ENCODE measurements at regions of chr10 and their contacts with region 1.

Region 1: DNA sequence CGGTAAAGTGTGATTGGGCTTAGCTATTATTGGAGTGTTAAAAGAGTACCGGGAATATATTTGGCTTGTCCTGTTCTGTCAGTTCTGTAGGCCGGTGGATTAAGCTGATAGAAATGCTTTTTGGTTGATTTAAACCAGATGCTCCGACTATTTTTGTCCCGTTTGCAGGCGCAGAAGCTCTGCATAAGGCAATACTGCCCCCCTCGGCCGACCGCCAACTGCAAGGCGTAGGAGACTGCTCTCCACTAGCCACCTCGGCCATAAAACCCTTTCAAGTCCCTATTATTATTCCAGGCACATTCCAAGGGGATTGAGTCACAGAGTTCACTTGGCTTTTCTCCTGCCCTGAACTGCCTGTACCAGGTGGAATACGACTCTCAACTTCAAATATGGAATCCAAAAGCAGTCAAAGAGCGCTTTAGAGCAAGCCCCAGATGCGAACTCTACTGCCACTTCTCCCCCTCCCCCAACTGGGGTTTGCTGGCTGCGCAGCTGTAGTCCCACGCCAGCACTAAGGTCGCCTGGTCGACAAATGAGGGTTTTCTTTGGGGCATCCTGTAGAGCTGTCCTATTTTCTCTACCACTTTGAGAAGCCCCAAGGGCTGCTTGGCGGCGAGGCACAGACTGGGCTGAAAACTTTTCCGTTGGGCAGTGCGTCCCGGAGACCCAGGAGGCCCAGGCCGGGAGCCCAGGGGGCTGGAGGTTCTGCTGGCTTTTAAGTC is 108.3 kb downstream of the REEP3 start:
- DNase-seq: peak; percentile 95 to 98
- ATAC-seq: peak; percentile 72 to 91 (median 84)
- H3K4me3 ChIP-seq: peak overlapping the region; percentile 30 to 74 (median 62)
- H3K27ac ChIP-seq: peak overlapping the region; percentile 78 to 100 (median 98)
- H3K4me1 ChIP-seq: peaks cover 0 to 43% (median 35%) of the 10 kb centered on the region in 9 donors
- H3K27me3 ChIP-seq: no peaks in the 10 kb centered on the region
- CTCF ChIP-seq: peak; percentile 59 to 91 (median 79)

Region 2: DNA sequence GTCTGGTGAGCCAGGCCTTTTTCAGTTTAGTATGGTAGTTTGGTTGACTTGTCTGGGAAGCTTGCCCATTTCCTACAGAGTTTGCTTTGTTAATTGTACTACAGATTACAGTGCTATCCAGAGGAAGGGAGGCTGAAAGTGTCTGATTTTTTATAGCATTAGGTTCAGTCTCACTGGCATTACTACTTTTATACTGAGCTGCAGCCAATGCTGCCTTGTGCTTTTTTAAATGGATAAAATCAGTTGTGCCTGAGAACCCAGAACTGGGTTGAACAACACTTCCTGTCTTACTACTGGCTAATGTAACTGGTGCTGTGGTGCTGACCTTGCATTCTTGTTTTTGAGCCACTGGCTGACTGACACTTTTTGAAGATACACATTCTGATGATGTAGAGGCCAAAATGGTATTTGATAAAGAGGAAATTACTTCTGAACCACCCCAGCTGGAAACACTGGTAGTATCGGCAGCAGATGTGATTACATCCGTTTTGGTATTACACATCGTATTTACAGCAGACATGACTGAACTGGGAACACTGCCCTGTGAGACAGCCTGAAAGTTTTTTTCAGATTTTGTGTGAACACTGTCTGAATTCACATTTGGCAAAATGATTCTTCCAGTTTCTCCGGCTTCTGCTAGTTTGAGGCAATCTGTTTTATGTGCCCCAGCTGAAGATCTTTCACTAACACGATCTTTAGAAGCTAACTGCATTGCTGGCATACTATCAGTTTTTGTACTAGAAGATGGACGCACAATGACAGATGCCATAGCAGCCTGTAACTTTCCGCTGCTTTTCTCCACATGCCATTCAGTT is 422.3 kb before region 1 on chr10:
- intact Hi-C with region 1: loop called in 3 of 10 experiments (anchors 5 to 10 kb)
- DNase-seq: peak in 1 of 2 donors; percentile 51
- ATAC-seq: peak; percentile 66 to 83 (median 80)
- H3K4me3 ChIP-seq: peak overlapping the region in 4 of 10 donors; percentile 9 to 26 (median 18)
- H3K27ac ChIP-seq: peak overlapping the region; percentile 7 to 80 (median 74)
- H3K4me1 ChIP-seq: peaks cover 0 to 78% (median 72%) of the 10 kb centered on the region in 9 donors
- H3K27me3 ChIP-seq: no peaks in the 10 kb centered on the region
- CTCF ChIP-seq: no peak

Region 3: GRCh38 chr10:63268798-63269503 is 360.6 kb before region 1 on chr10:
- intact Hi-C with region 1: loop called in 6 of 10 experiments (anchors 1 to 5 kb)
- DNase-seq: peak; percentile 21 to 93
- ATAC-seq: peak; percentile 94 to 99 (median 96)
- H3K4me3 ChIP-seq: peak overlapping the region; percentile 41 to 66 (median 59)
- H3K27ac ChIP-seq: peak overlapping the region; percentile 83 to 95 (median 89)
- H3K4me1 ChIP-seq: peaks cover 0 to 40% (median 23%) of the 10 kb centered on the region in 9 donors
- H3K27me3 ChIP-seq: no peaks in the 10 kb centered on the region
- CTCF ChIP-seq: peak in 6 of 9 donors; percentile 24 to 55 (median 46)

Region 4: DNA sequence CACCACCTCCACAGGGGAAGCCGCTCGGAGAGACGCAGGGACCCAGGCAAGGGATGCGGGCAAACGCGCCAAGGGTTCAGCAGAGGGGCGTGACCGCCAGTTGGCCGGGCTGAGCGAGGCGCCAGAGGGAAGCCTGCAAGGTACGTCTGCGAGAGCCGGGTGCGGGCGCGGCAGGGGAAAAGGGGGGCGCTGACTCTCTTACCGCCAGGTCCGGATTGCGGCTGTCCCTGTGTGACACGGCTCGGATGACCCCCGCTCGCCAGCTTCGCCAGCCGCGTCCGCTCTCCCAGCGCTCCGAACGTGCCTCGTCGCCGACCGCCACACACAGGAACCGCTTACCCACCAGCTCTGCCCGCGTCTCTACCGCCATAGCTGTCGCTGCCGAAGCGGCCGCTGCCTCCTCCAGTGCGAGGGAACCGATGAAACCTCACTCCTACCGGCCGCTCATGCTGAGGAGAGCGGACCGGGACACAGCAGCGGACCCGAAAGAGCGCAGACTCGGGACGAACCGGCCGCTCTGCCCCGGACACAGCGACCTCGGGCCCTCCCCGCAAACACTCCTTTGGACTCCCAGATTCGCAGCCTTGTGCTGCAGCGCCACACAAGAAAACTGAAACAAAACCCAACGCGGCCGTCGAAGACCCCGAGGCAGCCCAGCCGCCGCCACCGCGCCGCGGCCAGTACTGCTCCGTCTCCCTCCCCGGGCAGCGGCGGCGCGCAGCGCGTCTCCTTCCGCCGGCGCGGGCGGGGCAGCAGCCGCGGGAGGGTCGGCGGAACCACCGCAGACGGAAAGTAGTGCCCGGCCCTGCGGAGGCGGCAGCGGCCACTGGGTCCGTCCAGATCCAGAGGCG is 164.0 kb before region 1 on chr10 and contains the start of gene JMJD1C:
- intact Hi-C with region 1: loop called in 6 of 10 experiments (anchors 1 to 10 kb)
- DNase-seq: peak; percentile 76 to 84
- ATAC-seq: peak; percentile 91 to 97 (median 94)
- H3K4me3 ChIP-seq: peak within 1 kb of the TSS; percentile 77 to 86 (median 84)
- H3K27ac ChIP-seq: peak within 1 kb of the TSS; percentile 73 to 97 (median 93)
- H3K4me1 ChIP-seq: peaks cover 0 to 40% (median 28%) of the 10 kb centered on the region in 9 donors
- H3K27me3 ChIP-seq: no peaks in the 10 kb centered on the region
- CTCF ChIP-seq: peak in 1 of 9 donors; percentile 9
- total RNA-seq, gene JMJD1C: 30.9 to 51.9 (median 39.2) TPM

Region 5: GRCh38 chr10:63670291-63670898 is 40.9 kb after region 1 on chr10:
- intact Hi-C with region 1: loop called in 5 of 10 experiments (anchors 1 to 5 kb)
- DNase-seq: peak in 1 of 2 donors; percentile 80
- ATAC-seq: peak; percentile 74 to 92 (median 88)
- H3K4me3 ChIP-seq: peak overlapping the region in 2 of 10 donors; percentile 3 to 18
- H3K27ac ChIP-seq: peak overlapping the region; percentile 69 to 89 (median 77)
- H3K4me1 ChIP-seq: peaks cover 3 to 62% (median 53%) of the 10 kb centered on the region in 9 donors
- H3K27me3 ChIP-seq: no peaks in the 10 kb centered on the region
- CTCF ChIP-seq: no peak

Region 6: GRCh38 chr10:63711867-63712716 is 82.6 kb after region 1 on chr10:
- intact Hi-C with region 1: loop called in 9 of 10 experiments (anchors 1 to 5 kb)
- DNase-seq: peak; percentile 90 to 94
- ATAC-seq: peak; percentile 90 to 97 (median 93)
- H3K4me3 ChIP-seq: no peak overlapping the region
- H3K27ac ChIP-seq: peak overlapping the region; percentile 76 to 93 (median 82)
- H3K4me1 ChIP-seq: peaks cover 15 to 78% (median 55%) of the 10 kb centered on the region in 9 donors
- H3K27me3 ChIP-seq: no peaks in the 10 kb centered on the region
- CTCF ChIP-seq: no peak

Region 7: DNA sequence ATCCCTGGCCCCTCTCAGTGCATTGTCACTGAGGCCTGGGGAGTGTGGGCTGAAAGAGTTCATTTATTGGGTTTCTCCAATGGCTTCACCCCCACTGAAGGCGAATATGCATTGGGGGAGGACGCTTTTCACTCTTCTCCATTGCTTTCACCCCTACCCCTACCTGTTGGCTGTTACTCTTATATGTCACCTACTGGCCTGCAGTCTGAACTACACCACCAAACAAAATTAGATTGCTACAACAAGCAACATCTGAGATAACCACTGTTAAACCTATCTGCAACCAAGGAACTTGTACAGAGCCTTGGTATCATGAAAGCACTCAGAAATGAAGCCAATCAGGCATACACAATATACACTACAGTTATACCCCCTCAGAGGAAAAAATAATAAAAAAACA is 95.4 kb after region 1 on chr10:
- intact Hi-C with region 1: no loop called
- DNase-seq: no peak
- ATAC-seq: no peak
- H3K4me3 ChIP-seq: no peak overlapping the region
- H3K27ac ChIP-seq: no peak overlapping the region
- H3K4me1 ChIP-seq: peaks cover 0 to 33% (median 11%) of the 10 kb centered on the region in 9 donors
- H3K27me3 ChIP-seq: peaks cover 0 to 15% (median 0%) of the 10 kb centered on the region in 7 donors
- CTCF ChIP-seq: no peak

Region 8: DNA sequence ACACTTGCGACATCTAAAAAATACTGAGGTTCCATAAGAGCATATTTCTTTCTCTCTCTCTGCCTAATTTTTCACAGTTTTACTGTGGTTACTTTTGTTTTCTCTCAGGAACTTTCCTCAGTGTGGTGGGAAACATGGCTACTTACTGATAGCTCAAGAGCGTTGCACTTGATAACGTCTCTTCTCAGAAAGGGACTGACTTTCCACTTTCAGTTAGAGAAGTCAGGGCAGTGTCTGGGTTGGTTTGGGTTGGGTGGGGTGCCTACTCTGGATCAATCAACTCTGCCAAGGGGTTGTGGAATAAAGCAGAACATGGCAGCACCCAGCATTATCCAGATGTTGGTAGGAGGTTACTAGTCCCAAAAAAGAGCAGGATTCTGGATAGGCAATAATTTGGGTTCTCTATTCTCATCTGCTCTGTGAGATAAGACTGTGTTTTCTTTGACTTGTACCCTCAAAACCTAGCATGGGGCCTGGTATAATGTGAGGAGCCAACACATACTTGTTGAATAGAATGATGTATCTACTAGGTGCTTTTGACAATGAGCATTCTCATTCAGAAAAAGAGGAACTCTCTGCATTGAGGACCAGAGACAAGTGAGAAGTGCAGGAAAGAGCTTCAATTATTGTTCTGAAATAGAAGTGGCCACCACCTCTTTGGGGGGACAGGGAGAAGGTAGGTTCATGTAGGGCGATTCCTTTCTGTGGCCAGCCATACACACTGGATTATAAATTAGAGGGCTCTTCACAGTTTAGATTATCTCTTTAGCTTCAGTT is 207.3 kb after region 1 on chr10:
- intact Hi-C with region 1: no loop called
- DNase-seq: no peak
- ATAC-seq: no peak
- H3K4me3 ChIP-seq: no peak overlapping the region
- H3K27ac ChIP-seq: no peak overlapping the region
- H3K4me1 ChIP-seq: no peaks in the 10 kb centered on the region
- H3K27me3 ChIP-seq: peaks cover 0 to 8% (median 0%) of the 10 kb centered on the region in 7 donors
- CTCF ChIP-seq: no peak

Measured in heart right ventricle (tissue), 16 donors.